ENCODE measurements at regions of chr15 and their contacts with region 1.

Region 1: DNA sequence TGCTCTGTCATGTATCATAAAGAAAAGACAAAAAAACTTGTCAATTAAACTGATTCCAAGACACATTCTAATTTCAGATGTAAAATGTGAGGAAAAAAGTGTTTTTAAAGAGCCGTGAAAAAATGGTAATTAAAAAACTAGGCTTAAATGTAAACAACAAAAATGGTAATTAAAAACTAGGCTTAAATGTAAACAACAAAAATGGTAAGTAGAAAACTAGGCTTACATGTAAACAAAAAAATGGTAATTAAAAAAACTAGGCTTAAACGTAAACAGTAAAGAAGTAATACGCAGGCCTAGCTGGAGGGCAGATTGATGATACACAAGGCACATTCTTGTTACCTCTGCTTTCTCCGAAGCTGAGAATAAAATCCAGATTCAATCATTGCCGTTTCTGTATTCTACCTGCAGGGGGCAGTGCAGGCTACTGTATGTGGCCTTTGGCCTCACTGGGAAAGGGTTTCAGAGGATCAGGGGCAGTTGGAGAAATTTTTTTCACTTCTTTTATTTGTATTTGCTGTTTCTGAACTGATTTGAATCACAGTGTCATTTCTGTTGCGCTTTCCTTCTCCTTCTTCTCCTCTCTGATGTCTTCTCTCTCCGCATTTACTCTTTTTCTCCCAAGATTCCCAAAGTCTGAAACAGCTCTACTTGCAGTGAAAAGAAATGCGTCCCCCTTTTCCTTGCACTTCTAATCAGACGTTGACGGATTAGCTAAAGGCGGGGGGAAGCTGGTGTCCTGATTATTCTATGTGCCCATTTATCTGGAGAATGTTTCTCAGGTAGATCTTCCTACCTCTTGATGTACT is 67.2 kb upstream of the MCTP2 start:
- DNase-seq: no peak
- H3K4me3 ChIP-seq: no peak overlapping the region
- H3K27ac ChIP-seq: no peak overlapping the region
- H3K4me1 ChIP-seq: no peaks in the 10 kb centered on the region
- H3K27me3 ChIP-seq: no peaks in the 10 kb centered on the region
- CTCF ChIP-seq: peak; percentile 48 to 60 (median 56)

Region 2: GRCh38 chr15:94324117-94324826 is 160.1 kb after region 1 on chr15:
- intact Hi-C with region 1: loop called (anchors 5 kb)
- DNase-seq: no peak
- H3K4me3 ChIP-seq: no peak overlapping the region
- H3K27ac ChIP-seq: no peak overlapping the region
- H3K4me1 ChIP-seq: no peaks in the 10 kb centered on the region
- H3K27me3 ChIP-seq: no peaks in the 10 kb centered on the region
- CTCF ChIP-seq: peak; percentile 63 to 87 (median 73)

Measured in ascending aorta (tissue), 2 donors.